ENCODE measurements at regions of chr3 and their contacts with region 1.

Region 1: DNA sequence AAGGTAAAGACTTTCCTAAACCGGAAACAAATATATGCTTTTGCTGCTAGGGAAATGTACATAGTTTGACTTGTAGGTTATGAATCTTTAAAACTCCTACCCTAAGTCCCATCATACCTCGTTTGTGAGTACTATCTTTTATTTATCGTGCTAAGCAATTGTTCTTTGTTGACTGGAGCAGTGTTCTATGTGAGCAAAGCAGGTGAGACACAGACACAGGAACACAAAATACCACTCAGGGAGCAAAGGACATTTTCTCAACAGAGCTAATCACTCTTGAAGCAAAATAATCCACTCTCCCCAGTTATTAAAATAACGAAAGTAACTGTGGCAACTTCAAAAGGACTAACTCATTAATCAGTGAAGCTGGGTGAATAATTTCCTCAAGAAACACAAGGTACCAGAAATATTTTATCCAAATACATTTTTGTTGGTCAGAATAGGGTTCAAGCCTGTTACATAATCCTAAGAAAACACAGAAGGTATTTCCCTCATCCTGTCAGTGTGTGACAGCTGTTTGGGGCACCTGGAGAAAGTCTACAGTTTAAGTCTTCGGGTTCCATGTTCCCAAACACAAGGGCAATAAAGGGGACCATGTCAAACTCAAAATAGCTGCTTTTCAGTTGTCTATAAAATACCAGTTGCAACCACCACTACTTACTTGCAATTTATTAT is 407.7 kb downstream of the FOXP1 start:
- DNase-seq: no peak
- H3K4me3 Mint-ChIP-seq: no peak overlapping the region
- H3K27ac Mint-ChIP-seq: no peak overlapping the region
- H3K4me1 Mint-ChIP-seq: no peaks in the 10 kb centered on the region
- H3K27me3 Mint-ChIP-seq: no peaks in the 10 kb centered on the region

Region 2: DNA sequence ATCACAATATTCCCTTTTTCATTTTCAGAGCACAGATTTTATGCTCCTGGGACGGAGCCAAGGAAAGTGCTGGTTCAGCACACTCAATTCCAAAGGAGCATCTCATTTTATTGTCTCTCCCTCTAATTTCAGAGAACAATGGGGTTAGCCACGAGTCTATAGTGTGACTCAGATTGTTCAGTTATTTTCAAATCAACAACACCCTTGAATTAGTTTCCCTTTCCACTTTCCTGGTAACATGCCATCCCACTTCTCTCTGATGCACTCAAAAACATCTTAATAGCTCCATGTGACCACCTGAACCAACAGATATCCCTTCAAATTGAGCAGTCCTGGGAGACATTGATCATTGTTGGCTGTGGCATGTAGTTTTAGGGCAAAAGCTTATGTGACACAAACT is 473.7 kb before region 1 on chr3:
- intact Hi-C with region 1: no loop called
- DNase-seq: no peak
- H3K4me3 Mint-ChIP-seq: no peak overlapping the region
- H3K27ac Mint-ChIP-seq: no peak overlapping the region
- H3K4me1 Mint-ChIP-seq: peaks cover 7% of the 10 kb centered on the region
- H3K27me3 Mint-ChIP-seq: peaks cover 21% of the 10 kb centered on the region

Region 3: DNA sequence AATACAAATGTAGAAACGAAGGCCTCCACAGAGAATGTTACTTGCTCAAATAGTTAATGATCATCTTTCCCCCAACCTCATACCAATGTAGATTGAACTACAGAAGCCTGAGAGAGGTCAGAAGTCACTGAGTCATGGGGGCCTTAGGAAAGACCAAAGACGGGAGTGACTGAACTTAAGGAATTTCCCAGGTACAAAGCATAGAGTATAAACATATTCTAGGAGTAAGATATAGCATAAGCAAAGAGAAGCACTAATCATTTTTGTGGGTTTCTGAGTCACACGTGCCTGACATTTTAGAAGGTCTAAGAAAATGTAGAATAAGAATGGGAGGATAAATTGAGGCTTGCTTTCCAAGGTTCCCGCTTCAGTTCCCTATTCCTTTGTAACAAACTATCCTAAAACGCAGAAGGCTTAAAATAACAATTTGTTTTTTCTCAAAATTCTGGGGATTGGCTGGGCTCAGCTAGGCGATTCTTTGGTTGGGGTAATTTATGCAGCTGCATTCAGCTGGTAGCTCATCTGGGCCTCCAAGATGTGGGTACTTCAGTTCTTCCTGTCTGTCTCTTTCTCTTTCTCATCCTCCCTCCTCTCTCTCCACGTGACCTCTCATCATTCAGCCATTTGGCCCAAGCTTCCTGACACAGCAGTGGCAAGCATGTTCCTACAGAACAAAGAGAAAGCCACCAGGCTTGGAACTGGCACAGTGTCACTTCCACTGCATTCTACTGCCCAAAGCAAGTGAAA is 14.9 kb before region 1 on chr3:
- intact Hi-C with region 1: loop called (anchors 2 kb)
- DNase-seq: no peak
- H3K4me3 Mint-ChIP-seq: no peak overlapping the region
- H3K27ac Mint-ChIP-seq: peak overlapping the region; percentile 91
- H3K4me1 Mint-ChIP-seq: peaks cover 29% of the 10 kb centered on the region
- H3K27me3 Mint-ChIP-seq: no peaks in the 10 kb centered on the region